Cardiac septum (tissue), 1 donor: ENCODE measurements at regions of chr19 and their contacts with region 1.

Region 1: DNA sequence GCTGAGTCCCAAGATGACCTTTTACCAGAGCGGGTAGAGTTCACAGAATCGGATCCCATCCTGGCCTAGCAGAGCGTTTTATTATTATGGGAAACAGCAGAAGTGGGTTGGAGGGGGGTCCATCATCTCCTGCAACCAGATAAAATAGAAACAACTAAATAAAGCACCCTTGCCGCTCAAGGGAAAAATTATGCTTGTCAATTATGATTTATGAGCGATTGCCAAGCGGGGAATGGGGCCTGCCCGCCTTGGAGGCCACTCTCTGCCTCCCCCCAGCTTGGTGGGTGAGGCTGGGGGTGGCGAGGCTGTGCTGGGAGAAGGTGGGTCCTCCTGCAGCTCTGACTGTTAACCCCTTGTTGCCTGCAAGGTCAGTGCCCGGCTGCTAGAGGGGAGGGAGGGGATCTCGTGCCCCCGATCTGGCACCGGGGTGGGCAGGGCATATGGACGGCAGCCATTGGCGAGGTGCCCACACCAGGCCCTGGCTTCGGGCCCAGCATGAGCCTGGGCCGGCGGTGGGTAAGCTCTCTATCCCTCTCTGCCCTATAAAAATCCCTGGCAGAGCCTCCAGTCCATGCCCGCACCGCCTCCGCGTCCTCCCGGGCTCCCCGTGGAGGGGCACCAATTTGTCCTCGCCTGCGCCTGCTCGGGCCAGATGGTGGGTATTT is 129.1 kb downstream of the URI1 start:
- DNase-seq: peak; percentile 79

Region 2: DNA sequence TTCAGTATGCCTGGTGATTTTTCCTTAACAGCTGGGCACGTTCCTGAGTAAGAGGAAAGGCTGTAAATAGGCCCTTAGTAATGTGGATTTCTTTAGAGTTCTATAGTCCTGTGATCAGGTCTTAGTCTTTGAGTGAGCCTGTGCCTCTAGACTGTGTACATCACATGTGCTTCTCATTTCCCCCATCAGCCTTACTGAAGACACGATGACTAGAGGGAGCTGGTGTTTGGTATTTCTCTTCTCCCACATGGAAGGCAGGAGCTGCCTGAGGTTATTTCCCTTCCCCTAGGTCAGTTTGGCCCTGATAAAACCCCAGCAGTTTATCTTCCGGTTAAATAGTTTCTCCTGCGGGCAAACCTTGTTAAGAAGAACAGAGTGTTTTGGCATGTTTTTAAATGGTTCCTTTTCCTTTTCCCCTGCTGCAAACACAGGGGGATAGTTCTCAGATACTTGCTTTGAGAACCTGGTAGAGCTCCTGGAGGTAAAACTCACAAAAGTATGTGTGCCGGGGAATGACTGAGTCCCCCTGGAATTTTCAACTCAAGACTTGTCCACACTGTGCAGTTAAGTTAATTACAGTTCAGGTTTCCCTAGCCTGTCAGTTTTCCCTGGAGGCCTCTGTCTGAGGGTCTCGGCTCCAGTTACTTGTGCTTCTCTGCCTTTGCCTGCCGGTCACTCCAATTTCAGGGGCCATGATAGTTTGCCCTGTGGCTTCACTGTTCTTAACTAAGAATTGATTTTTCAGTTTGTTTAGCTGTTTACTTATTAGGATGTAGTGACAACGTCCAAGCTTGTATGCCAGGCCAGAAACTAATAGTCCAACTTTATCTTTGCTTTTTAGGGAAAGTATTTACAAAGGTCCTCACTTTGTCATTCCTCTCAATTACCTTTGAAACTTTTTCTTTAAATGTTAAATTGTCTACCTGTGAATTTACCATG is 34.6 kb before region 1 on chr19:
- intact Hi-C with region 1: no loop called
- DNase-seq: no peak

Region 3: DNA sequence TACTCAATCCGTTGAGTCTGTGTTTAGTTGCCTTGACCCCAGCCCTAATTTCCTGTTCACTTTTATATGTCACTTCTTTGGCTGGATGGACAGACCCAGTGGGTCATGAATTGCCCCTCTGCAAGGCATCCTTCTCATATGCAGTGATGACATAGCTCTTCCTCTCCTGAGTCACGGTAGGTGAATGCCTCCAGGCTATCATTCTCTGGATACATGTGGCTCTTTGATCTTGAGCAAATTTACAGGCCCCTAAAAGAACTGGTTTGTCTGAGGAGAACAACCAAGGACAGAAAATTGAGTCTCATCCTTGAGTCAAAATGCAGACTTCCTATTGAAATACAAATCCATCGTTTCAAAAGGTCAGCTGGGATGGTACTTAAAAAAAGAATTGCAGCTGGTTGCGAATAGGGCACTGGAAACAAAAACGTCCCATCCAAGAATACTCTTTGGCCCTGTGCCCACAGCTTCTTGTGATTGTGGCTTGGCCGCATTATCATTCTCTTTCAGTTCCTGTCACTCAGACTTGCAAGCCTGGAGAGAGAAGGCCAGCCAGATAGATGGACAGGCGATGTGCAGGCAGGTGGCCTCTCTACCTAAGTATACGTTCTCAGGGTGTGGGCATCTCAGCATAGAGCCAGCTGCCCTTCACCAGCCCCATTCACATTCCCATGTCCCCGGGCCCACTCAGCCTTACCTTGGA is 92.4 kb after region 1 on chr19:
- intact Hi-C with region 1: loop called (anchors 5 kb)
- DNase-seq: peak; percentile 26

Region 4: DNA sequence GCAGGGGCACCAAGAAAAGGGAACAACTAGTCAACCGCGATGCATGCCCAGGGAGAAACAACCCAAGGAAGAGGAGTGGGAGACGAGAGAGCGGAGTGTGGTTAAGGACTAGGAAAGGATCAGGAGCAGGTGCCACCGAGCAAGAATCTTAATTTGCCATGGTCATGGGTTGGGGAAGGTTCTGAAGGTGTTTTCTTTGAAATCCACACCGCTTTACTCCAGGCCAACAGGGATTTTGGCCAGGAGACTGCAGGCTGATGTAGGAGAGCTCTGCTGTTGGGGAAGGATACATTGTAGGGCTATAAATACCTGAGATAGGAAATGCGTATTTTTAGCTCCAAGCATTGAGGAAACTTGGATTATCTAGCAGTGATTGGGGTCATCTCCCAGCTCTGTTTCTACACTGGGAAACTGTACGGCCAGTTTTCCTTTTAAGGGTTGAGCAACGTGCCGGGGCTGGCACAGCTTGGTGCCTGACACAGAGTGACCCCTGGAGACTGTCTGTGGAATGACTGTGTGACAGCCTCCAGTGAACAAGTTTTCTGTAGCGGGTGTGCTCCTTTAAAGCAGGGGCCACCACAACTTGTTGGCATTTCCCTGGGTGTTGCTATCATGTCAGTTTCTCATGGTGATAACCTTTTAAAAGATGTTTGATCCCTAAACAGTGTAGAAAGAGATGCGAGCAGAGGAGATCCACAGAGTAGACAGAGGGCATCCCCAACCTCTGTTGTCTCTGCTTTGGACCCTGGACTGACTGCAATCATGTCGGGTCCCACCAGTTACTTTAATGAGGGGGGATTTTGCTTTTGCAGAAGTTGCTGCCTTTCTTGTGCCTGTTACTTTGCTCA is 335.3 kb after region 1 on chr19:
- intact Hi-C with region 1: loop called (anchors 10 kb)
- DNase-seq: peak; percentile 66